Activated naive CD4-positive, alpha-beta T cell treated with anti-CD3 and anti-CD28 coated beads for 36 hours (primary cell): ENCODE measurements at regions of chr5 and their contacts with region 1.

Region 1: GRCh38 chr5:132622608-132623007 is 35.4 kb upstream of the IL13 start:
- DNase-seq: no peak
- H3K4me3 Mint-ChIP-seq: no peak overlapping the region
- H3K27ac Mint-ChIP-seq: no peak overlapping the region
- H3K4me1 Mint-ChIP-seq: peaks cover 12% of the 10 kb centered on the region
- H3K27me3 Mint-ChIP-seq: no peaks in the 10 kb centered on the region

Region 2: DNA sequence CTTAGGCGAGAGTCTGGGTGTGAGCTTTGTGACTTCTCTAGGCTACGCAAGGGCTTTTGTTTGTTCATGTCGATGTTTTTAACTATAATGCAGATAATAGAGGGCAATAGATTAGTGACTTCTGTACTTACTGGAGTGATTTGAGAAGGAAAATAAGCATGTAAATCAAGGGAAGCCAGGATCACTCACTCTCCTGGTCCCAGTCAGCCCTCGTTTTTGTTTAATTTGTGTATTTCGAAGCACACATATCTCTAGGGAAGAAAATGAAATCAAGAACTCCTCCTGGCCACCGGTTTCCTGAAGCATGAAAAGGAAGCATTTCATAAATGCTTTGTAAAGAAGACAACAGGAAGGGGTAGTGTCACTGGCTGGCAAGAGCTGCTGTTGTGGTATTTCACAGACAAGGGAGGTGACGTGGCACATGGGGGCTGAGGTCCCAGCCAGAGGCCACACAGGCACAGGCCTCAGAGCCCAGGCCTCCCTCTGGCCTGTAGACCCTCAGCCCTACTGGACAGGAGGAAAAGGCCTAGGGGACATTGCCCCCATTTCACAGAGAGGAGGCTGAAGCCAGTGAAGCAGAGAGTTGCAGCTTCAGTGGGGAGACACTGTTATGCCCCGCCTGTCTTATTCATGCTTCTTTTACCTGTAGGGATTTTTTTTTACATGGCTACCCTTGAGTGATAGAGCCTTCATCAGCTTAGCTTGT is 166.2 kb before region 1 on chr5:
- CTCF ChIA-PET with region 1: interaction called, 3 read pairs
- intact Hi-C with region 1: loop called (anchors 1 kb)
- DNase-seq: peak; percentile 66
- H3K4me3 Mint-ChIP-seq: peak overlapping the region; percentile 0
- H3K27ac Mint-ChIP-seq: peak overlapping the region; percentile 83
- H3K4me1 Mint-ChIP-seq: peaks cover 84% of the 10 kb centered on the region
- H3K27me3 Mint-ChIP-seq: no peaks in the 10 kb centered on the region

Region 3: DNA sequence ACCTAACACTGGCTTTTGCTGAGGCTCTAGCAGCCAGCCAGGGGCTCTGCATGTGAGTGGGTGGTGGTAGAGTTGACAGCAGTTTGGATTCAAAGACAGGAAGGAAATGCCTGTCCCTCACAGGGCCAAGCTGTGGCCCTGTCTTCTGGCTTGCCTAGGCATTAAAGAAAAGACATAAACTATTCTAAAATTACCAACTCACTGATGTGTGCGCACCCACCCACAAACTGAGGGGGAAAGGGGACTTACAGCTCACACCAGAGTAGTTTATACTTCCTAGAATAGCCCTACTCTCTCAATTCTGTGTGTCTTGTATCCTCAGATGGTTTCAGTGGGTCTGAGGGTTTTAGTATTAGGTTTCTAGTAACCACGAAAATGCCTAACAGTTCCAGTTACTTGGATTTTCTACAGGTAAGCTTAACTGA is 17.1 kb after region 1 on chr5:
- CTCF ChIA-PET with region 1: no interaction called
- intact Hi-C with region 1: loop called (anchors 1 kb)
- DNase-seq: no peak
- H3K4me3 Mint-ChIP-seq: no peak overlapping the region
- H3K27ac Mint-ChIP-seq: no peak overlapping the region
- H3K4me1 Mint-ChIP-seq: peaks cover 43% of the 10 kb centered on the region
- H3K27me3 Mint-ChIP-seq: no peaks in the 10 kb centered on the region

Region 4: GRCh38 chr5:132688536-132689339 is 66.1 kb after region 1 on chr5:
- CTCF ChIA-PET with region 1: no interaction called
- intact Hi-C with region 1: loop called (anchors 1 kb)
- DNase-seq: peak; percentile 69
- H3K4me3 Mint-ChIP-seq: no peak overlapping the region
- H3K27ac Mint-ChIP-seq: peak overlapping the region; percentile 17
- H3K4me1 Mint-ChIP-seq: peaks cover 27% of the 10 kb centered on the region
- H3K27me3 Mint-ChIP-seq: no peaks in the 10 kb centered on the region